Right cardiac atrium (tissue), 5 donors: ENCODE measurements at regions of chr1 and their contacts with region 1.

Region 1: DNA sequence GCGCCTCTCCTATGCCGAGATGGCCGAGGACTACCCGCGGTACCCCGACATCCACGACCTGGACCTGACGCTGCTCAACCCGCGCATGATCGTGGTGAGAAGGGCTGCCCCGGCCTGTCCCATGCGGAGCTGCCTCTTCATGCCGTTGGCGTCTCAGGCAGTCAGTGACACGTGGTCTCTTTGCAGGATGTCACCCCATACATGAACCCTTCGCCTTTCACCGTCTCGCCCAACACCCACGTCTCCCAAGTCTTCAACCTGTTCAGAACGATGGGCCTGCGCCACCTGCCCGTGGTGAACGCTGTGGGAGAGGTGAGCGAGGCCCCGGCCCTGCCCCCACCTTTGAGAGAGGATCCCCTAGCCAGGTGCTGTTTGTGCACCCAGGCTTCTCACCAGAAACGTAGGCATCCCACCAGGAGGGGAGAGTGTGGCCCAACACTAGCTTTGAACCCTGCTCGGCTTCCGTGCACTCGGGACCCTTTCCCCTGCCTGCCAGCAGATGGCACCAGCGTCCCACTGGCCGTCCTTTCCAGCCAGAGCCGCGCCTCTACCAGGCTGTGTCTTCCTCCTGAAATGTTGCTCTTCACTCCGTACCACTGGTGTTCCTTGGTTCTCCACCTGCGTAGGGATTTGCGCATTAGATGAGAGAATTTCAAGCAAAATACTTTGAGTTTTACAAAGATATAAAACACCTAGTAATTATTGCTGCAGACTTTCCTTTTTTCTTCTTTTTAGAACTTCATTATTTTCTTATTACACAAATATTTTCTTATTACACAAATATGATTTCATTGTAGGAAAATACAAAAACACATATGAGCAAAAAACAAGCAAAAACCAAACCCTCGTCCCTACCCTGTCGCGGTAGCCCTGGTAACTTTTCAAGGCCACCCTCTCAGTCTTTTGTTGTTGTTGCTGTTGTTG is 9.0 kb downstream of the NPPA start:
- DNase-seq: peak; percentile 75 to 91 (median 88)
- ATAC-seq: peak; percentile 47 to 50
- H3K4me3 ChIP-seq: no peak overlapping the region
- H3K27ac ChIP-seq: no peak overlapping the region
- H3K4me1 ChIP-seq: no peaks in the 10 kb centered on the region
- H3K27me3 ChIP-seq: no peaks in the 10 kb centered on the region

Region 2: DNA sequence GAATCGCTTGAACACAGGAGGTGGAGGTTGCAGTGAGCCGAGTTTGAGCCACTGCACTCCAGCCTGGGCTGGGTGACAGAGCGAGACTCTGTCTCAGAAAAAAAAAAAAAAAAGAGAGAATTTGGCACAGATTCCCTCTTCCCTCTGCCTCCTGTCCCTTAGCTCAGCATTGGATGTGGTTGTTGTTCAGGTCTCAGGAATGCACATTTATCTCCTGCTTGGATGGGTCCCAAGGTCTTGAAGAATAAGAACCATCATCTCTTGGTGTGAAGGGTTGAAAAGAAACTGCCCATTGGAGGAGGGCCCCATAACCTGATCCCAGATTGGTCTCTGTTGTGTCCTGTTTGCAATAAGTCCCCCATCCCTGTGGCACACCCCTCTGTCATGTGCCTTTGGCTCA is 530.8 kb before region 1 on chr1:
- intact Hi-C with region 1: no loop called
- DNase-seq: no peak
- ATAC-seq: no peak
- H3K4me3 ChIP-seq: no peak overlapping the region
- H3K27ac ChIP-seq: no peak overlapping the region
- H3K4me1 ChIP-seq: no peaks in the 10 kb centered on the region
- H3K27me3 ChIP-seq: no peaks in the 10 kb centered on the region

Region 3: DNA sequence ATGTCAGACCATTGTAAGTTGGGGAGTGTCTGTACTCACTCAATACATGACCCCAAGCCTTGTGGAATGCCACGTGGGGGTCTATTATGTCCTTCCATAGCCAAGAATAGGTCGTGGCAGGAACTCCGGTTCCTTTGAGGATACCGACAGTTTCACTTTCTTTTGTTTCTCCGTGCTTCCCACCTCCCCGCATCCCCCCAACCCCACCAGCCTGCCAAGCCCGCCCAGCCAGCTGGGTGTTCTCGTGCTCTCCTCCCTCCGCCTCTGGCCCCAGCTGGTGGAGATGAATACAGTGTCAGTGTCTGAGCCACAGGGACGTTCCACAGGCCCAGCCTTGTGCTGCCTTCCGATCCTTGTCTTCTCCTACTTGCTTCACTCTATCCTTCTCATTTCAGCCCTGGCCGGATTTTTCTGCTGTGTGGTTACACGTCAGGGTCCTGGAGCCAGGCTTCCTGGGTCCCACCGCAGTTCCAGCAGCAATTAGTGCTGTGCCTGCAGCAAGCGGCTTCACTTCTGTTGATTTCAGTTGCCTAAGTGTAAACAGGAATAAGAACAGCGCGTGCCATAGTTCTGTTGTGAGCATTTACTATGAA is 106.8 kb before region 1 on chr1:
- intact Hi-C with region 1: no loop called
- DNase-seq: peak; percentile 75 to 90 (median 82)
- ATAC-seq: peak; percentile 59 to 68
- H3K4me3 ChIP-seq: no peak overlapping the region
- H3K27ac ChIP-seq: peak overlapping the region; percentile 54
- H3K4me1 ChIP-seq: no peaks in the 10 kb centered on the region
- H3K27me3 ChIP-seq: no peaks in the 10 kb centered on the region

Region 4: DNA sequence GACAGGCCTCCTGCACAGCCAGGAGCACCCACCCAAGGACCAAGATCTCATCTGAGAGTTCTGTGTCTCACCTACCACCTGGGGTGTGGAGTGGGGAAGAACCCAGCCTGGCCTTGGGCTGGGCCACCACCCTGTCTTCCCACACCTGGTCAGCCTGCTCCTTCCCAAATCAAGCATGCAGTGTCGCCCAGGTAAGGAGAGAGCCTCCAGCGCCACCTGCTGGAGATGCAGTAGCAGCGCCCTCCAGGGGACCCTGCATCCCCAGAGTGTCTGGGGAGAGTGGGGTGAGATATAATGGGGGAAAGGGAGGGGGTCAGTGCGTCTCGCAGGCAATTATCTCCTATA is 55.3 kb after region 1 on chr1:
- intact Hi-C with region 1: loop called (anchors 1 to 5 kb)
- DNase-seq: peak; percentile 60 to 85 (median 83)
- ATAC-seq: peak; percentile 82
- H3K4me3 ChIP-seq: no peak overlapping the region
- H3K27ac ChIP-seq: no peak overlapping the region
- H3K4me1 ChIP-seq: no peaks in the 10 kb centered on the region
- H3K27me3 ChIP-seq: no peaks in the 10 kb centered on the region

Region 5: DNA sequence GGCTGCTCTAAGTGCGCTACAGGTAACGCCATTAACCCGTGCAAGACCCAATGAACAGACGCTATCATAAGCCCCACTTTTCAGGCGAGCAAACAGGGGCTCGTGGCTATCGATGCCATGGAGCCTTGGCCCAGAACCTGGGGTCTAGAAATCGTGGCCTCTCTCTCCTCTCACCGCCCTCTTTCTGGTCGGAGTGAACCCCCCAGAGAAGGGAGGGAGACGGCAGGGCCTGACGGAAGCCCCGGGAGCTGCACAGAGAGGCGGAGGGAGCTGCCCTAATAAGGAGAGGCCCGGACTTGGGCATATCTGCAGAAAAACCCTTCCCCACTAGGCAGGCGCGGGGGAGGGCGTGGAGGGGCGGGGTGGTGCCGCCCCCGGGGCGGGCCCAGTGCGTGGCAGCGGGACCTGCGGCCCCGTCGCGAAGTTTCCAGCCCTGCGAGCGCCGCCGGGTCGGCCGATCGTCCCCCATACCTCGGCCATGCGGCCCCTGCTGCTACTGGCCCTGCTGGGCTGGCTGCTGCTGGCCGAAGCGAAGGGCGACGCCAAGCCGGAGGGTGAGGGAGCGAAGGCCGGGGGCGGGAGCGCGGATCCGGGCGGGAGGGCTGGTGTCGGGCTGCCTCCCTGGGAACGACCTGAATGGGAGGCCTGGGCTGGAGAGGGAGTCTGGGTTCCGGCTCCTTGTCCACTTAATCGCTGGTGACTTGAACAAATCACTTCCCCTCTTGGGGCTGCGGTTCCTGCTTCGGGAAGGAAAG is 95.9 kb after region 1 on chr1 and contains the start of gene PLOD1:
- intact Hi-C with region 1: no loop called
- DNase-seq: peak; percentile 92 to 98 (median 97)
- ATAC-seq: peak; percentile 95 to 97
- H3K4me3 ChIP-seq: peak within 1 kb of the TSS; percentile 60
- H3K27ac ChIP-seq: peak within 1 kb of the TSS; percentile 95
- H3K4me1 ChIP-seq: peaks cover 13% of the 10 kb centered on the region
- H3K27me3 ChIP-seq: no peaks in the 10 kb centered on the region
- total RNA-seq, gene PLOD1: 49.5 to 77.8 (median 63.1) TPM

Region 6: DNA sequence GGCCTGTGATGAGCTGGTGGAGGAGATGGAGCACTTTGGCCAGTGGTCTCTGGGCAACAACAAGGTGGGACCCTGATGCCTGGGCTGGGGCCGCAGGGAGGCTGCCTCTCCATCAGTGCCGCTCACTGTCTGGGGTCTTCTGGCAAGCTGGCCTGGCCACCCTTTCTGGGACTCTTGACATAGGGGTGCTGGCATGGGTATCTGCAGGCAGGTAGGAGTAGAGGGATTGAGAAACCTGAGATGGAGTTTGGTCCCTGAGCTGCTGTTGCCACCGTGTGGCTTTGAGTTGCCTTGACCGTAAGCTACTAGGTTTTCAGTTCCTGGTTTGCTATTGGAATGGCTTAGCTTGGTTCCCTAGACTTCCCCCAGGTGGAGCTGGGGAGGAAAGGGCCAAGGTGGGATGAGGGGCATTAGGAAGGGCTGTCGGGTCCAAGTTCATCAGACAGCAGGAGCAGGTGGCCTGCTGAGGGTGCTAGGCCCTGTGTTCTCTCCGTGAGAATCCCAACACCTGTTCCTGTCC is 128.5 kb after region 1 on chr1:
- intact Hi-C with region 1: loop called in 2 of 4 experiments (anchors 10 kb)
- DNase-seq: no peak
- ATAC-seq: peak; percentile 15 to 37
- H3K4me3 ChIP-seq: no peak overlapping the region
- H3K27ac ChIP-seq: no peak overlapping the region
- H3K4me1 ChIP-seq: no peaks in the 10 kb centered on the region
- H3K27me3 ChIP-seq: no peaks in the 10 kb centered on the region

Region 7: GRCh38 chr1:11979851-11980675 is 141.5 kb after region 1 on chr1 and contains the start of gene MFN2:
- intact Hi-C with region 1: loop called in 1 of 4 experiments (anchors 10 kb)
- DNase-seq: peak; percentile 98 to 99 (median 98)
- ATAC-seq: peak; percentile 95 to 96
- H3K4me3 ChIP-seq: peak within 1 kb of the TSS; percentile 78
- H3K27ac ChIP-seq: peak within 1 kb of the TSS; percentile 94
- H3K4me1 ChIP-seq: peaks cover 10% of the 10 kb centered on the region
- H3K27me3 ChIP-seq: no peaks in the 10 kb centered on the region
- total RNA-seq, gene MFN2: 386 to 449 (median 419) TPM

Region 8: DNA sequence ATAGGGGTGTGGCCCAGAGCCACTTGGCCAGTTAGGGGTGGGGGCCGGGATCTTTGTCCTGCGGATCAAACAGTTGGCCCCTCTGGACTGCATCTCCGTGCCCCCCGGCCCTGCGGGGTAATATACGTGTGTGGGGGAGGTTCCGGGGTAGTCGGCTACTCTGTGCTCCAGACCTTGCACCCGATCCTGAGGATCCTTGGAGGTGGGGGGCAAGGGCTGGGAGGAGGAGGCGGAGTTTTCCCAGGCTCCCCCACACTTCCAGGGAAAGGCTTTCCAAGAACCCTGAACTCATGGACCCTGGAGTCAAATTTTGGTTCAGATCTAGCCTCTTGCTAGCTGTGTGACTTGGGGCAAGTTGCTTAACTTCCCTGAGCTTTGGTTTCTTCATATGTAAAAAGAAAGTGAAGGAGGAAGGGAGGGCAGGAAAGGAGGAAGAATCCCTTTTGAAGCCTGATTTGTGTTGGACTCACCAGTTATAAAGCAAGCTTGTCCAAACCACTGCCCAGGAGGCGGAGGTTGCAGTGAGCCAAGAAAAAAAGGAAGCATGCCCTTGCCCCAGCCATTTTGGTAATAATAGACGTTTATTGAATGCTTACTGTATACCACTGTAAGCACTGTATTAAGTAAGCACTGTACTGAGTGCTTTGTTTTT is 181.4 kb after region 1 on chr1:
- intact Hi-C with region 1: loop called in 1 of 4 experiments (anchors 10 kb)
- DNase-seq: peak in 1 of 3 donors; percentile 40
- ATAC-seq: peak; percentile 5 to 17
- H3K4me3 ChIP-seq: peak overlapping the region; percentile 76
- H3K27ac ChIP-seq: peak overlapping the region; percentile 15
- H3K4me1 ChIP-seq: peaks cover 1% of the 10 kb centered on the region
- H3K27me3 ChIP-seq: no peaks in the 10 kb centered on the region